ENCODE measurements at regions of chr11 and their contacts with region 1.

Region 1: DNA sequence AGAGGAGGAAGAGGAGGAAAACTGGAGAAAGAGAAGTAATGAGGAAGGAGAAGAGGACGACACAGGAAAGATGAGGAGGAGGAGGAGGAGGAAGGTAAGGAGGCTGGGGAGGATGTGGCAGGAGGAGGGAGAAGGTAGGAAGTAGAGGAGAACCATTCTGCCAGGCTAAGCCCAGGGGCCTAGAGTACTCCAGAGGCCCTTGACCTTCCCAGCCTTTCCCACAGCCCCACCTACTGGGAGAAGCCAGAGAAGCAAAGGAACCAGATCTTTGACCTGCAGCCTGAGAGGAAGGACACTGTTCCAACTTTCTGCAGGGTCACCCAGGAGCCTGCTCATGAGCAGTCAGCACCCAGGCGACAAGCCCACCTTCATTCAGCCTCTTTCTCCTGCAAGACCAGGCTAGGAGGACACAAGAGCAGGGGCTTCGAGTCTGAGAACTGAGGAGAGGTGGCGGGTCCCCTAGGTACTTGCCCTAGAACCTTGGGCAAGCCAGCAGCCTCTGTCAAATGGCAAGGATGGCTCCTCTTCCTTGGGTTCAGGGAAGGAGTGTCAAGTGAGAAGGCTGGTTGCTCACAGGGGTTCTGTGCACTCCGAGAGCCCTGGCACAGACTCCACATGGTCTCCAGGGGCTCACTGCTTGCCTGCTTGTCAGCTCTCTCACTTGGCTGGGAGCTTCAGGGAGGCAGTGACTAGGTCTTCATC is 27.9 kb upstream of the OAF start:
- DNase-seq: no peak
- CTCF ChIP-seq: peak; percentile 38

Region 2: GRCh38 chr11:120160436-120160835 is 22.5 kb before region 1 on chr11:
- CTCF ChIA-PET with region 1: no interaction called
- POLR2A ChIA-PET with region 1: no interaction called
- DNase-seq: no peak
- CTCF ChIP-seq: no peak

Region 3: DNA sequence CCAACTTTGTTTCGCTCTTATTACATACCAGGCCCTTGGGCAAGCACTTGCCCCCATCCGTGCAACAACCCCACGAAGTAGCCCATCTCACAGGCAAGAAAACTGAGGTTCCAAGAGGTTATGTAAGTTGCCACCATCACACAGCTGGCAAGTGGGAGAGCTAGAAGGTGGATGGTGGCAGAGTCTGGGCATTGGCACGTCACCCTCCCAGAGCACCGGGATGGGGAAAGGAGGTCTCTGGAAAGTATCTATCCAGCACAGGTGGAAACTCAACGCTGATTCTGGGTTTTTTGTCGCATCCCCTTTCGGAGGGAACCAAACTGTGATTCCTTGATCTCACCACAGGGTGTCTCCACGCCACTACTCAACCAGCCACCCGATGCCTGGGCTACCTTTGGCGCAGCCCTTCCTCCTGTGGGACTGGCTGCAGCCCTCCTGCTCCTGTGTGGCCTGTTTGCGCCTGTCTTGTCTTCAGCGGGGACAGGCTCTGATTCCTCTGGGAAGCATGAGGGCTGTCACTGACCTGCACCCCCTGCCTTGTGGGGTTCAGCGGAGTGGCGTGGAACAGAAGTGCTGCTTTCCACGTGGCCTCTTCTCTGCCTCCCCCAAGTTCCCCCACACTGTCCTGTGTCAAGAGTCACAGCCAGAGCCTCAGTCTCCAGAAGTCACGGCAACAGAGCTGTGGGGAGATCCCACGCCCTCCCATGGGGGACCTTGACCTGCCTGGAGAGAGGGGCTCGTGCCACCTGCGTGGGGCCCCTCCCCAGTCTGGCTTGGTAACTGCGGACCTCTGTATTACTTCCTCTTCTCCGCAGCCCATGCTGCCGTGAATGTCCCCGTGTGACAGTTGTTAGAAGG is 10.7 kb before region 1 on chr11:
- CTCF ChIA-PET with region 1: interaction called, 55 read pairs
- POLR2A ChIA-PET with region 1: no interaction called
- DNase-seq: peak; percentile 82
- CTCF ChIP-seq: peak; percentile 74

Region 4: DNA sequence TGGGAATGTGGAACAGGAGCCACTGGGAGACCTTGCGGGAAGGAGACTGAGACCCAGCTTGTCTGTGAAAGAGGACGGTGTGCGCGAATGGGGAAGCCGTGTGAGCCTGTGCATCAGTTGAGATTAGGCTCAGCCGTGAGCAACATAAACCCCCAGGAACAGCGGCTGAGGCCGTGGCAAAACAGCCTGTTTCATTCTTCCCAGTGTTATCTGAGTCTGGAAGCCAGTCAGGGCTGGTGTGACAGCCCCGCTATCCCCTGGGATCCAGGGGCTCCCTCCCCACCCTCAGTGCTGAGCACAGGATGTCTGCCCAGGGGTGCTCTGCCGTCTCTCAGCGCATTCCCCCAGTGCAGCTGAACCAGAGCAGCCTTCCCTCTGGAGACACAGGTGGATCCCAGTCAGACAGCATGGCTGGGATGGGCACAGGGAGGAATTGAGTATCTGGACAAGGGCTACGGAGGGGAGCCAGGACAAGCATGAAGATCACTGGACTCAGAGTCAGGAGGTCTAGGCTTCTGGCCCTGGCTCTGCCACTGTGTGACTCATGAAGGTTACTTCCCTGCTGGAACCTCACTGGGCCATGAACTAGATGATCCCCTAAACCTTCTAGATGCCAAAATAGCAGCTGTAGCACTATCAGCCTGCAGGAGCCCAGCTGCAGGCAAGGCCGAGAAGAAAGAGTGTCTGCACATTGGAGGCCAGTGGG is 36.4 kb after region 1 on chr11:
- CTCF ChIA-PET with region 1: no interaction called
- POLR2A ChIA-PET with region 1: no interaction called
- DNase-seq: no peak
- CTCF ChIP-seq: no peak

Region 5: GRCh38 chr11:120229451-120230424 is 46.8 kb after region 1 on chr11:
- CTCF ChIA-PET with region 1: interaction called, 20 read pairs
- POLR2A ChIA-PET with region 1: no interaction called
- DNase-seq: peak; percentile 52
- CTCF ChIP-seq: peak; percentile 74

Measured in GM10248 (cell line).